ENCODE measurements at regions of chr10 and their contacts with region 1.

Region 1: GRCh38 chr10:97333560-97334369 is 764 bp downstream of the FRAT2 start:
- DNase-seq: peak; percentile 61
- H3K4me3 Mint-ChIP-seq: peak overlapping the region; percentile 81
- H3K27ac Mint-ChIP-seq: peak overlapping the region; percentile 87
- H3K4me1 Mint-ChIP-seq: peaks cover 42% of the 10 kb centered on the region
- H3K27me3 Mint-ChIP-seq: peaks cover 31% of the 10 kb centered on the region

Region 2: DNA sequence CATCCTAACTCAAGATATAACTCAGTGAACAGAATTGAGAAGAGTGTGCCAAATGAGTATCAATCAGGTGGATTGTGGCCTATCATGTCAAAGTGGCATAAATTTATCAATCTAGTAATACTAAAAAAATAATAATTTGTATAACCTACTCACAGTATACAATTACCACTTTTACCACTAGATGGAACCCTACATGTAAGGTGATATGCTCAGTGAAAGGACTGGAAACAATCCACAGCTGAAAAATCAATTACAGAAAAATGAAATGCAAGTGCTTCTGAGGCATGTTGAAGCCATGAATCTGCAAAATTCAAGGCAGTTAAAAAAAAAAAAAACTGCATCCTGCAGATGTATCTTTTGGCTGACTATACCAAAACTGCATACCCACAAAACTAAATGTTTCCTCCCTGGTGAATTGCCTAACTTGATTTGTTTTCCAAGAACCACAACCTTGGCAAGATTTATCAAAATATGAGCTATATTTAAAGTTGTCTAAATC is 55.2 kb before region 1 on chr10:
- CTCF ChIA-PET with region 1: interaction called, 13 read pairs
- DNase-seq: no peak
- H3K4me3 Mint-ChIP-seq: no peak overlapping the region
- H3K27ac Mint-ChIP-seq: no peak overlapping the region
- H3K4me1 Mint-ChIP-seq: peaks cover 4% of the 10 kb centered on the region
- H3K27me3 Mint-ChIP-seq: no peaks in the 10 kb centered on the region

Region 3: DNA sequence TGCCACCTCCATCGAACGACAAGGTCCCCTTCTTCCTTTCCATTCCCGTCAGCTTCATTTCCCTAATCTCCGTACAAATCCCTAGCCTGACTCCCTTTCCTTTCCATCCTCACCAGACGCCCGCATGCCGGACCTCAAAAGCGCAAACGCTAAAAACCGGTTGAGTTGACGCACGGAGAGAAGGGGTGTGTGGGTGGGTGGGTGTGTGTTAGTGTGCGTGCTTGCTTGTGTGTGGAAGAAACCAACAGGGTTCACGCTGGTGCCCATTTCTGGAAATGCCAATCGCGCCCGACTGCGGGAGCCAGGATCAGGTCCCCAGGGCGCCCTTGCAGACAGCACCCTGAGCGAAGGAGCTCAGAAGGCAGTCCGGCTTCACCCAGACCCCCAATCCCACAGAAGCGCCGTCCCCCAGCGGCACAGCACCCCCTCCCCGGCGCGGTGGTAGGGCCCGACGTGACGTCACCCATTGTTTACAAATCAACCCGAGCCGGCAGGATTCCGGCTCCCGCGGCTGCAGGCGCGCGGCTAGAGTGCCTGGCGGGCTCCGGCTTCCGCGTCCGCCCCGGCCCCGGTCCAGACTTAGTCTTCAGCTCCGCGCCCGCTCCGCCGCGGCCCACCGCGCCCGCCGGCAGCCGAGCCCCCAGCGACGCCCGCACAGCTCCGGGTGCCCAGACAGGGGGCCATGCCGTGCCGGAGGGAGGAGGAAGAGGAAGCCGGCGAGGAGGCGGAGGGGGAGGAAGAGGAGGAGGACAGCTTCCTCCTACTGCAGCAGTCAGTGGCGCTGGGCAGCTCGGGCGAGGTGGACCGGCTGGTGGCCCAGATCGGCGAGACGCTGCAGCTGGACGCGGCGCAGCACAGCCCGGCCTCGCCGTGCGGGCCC is 14.8 kb before region 1 on chr10 and contains the start of gene FRAT1:
- CTCF ChIA-PET with region 1: interaction called, 18 read pairs
- DNase-seq: peak; percentile 92
- H3K4me3 Mint-ChIP-seq: peak within 1 kb of the TSS; percentile 93
- H3K27ac Mint-ChIP-seq: peak within 1 kb of the TSS; percentile 99
- H3K4me1 Mint-ChIP-seq: peaks cover 27% of the 10 kb centered on the region
- H3K27me3 Mint-ChIP-seq: peaks cover 22% of the 10 kb centered on the region

Region 4: GRCh38 chr10:97532935-97533671 is 199.3 kb after region 1 on chr10:
- CTCF ChIA-PET with region 1: no interaction called
- DNase-seq: no peak
- H3K4me3 Mint-ChIP-seq: no peak overlapping the region
- H3K27ac Mint-ChIP-seq: no peak overlapping the region
- H3K4me1 Mint-ChIP-seq: no peaks in the 10 kb centered on the region
- H3K27me3 Mint-ChIP-seq: no peaks in the 10 kb centered on the region